ENCODE measurements at regions of chr6 and their contacts with region 1.

Region 1: DNA sequence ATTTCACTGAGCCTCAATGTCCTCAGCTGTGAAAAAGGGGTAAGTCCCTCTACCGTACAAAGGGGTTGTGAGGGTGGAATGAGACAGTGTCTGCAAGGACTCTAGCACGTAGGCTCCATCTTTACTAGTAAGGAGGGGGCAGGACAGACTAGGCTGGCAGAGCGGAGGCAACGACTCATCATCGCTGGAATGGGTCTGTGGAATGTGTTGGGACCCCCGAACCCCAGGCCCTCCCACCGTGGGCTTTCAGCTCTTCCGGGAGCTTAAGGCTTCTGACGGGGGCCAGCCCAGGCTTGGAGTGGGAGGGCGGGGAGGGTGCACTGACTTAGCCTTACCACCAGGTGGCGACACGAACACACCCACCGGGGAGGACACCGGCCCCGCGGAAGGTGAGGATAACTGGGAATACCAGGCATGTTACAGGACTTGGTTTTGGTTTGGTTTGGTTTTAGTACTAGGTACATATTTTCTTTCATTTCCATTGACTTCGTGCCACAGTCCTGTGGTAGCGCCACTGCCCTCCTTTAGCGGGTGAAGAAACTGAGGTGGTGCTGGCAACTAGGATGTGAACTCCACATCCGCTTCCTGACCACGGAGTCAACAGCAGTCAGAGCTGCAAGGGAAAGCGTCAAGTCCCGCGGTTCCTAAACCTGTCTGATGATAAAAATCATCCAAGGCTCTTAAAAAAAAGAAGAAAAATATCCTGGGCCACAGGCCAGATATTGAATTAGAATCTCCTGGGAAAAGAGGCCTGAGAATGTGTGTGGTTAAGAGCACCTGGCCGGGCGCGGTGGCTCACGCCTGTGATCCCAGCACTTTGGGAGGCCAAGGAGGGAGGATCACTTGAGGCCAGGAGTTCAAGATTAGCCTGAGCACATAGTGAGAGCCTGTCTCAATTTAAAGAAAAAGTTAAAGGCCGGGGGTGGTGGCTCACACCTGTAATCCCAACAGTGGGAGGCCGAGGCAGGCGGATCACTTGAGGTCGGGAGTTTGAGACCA is 10.3 kb upstream of the TULP1 start:
- DNase-seq: peak; percentile 81
- H3K4me3 ChIP-seq: no peak overlapping the region
- H3K27ac ChIP-seq: no peak overlapping the region
- H3K4me1 ChIP-seq: no peaks in the 10 kb centered on the region
- H3K27me3 ChIP-seq: no peaks in the 10 kb centered on the region
- CTCF ChIP-seq: peak; percentile 95

Region 2: GRCh38 chr6:35534407-35535170 is 11.6 kb after region 1 on chr6:
- CTCF ChIA-PET with region 1: interaction called, 14 read pairs
- POLR2A ChIA-PET with region 1: no interaction called
- intact Hi-C with region 1: no loop called
- DNase-seq: peak; percentile 78
- H3K4me3 ChIP-seq: no peak overlapping the region
- H3K27ac ChIP-seq: peak overlapping the region; percentile 41
- H3K4me1 ChIP-seq: peaks cover 14% of the 10 kb centered on the region
- H3K27me3 ChIP-seq: no peaks in the 10 kb centered on the region
- CTCF ChIP-seq: no peak

Region 3: DNA sequence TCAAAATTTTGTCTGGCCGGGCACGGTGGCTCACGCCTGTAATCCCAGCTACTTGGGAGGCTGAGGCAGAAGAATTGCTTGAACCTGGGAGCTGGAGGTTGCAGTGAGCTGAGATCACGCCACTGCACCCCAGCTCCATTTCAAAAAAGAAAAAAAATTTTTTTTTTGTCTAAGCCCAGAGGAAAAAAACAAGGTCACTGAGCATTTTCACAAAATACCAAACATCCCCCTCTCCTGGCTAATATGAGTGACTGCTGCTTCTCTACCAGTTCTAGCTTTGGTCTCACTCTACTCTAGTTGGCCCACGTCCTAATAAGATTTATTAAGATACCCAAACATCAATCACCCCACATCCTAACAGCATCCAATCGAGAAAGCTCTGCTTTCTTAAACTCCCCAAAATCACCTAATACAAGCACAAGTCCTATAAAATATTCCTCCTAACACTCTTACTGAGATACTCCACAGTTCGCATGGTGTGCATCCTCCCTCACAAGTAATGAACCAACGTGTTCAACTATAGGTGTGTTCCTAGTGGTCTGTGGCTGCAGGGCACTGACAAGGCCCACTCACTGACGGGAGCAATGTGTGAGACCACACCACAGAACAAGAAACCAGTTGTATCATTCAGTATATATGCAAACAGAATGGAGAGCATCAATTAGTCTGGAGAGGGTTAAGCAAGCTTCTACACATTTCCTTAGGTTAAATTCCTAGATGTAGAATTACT is 101.5 kb after region 1 on chr6:
- CTCF ChIA-PET with region 1: interaction called, 13 read pairs
- POLR2A ChIA-PET with region 1: no interaction called
- intact Hi-C with region 1: no loop called
- DNase-seq: peak; percentile 47
- H3K4me3 ChIP-seq: no peak overlapping the region
- H3K27ac ChIP-seq: no peak overlapping the region
- H3K4me1 ChIP-seq: peaks cover 2% of the 10 kb centered on the region
- H3K27me3 ChIP-seq: no peaks in the 10 kb centered on the region
- CTCF ChIP-seq: peak; percentile 57

Region 4: GRCh38 chr6:35737413-35738211 is 214.7 kb after region 1 on chr6:
- CTCF ChIA-PET with region 1: interaction called, 52 read pairs
- POLR2A ChIA-PET with region 1: no interaction called
- intact Hi-C with region 1: loop called (anchors 1 kb)
- DNase-seq: peak; percentile 89
- H3K4me3 ChIP-seq: no peak overlapping the region
- H3K27ac ChIP-seq: no peak overlapping the region
- H3K4me1 ChIP-seq: peaks cover 12% of the 10 kb centered on the region
- H3K27me3 ChIP-seq: no peaks in the 10 kb centered on the region
- CTCF ChIP-seq: peak; percentile 77

Region 5: GRCh38 chr6:36094753-36095496 is 572.0 kb after region 1 on chr6:
- CTCF ChIA-PET with region 1: interaction called, 10 read pairs
- POLR2A ChIA-PET with region 1: no interaction called
- intact Hi-C with region 1: no loop called
- DNase-seq: peak; percentile 87
- H3K4me3 ChIP-seq: no peak overlapping the region
- H3K27ac ChIP-seq: no peak overlapping the region
- H3K4me1 ChIP-seq: peaks cover 10% of the 10 kb centered on the region
- H3K27me3 ChIP-seq: no peaks in the 10 kb centered on the region
- CTCF ChIP-seq: peak; percentile 97

Measured in A673 (cell line).